Dorsolateral prefrontal cortex (tissue), 120 donors: ENCODE measurements at regions of chr6 and their contacts with region 1.

Region 1: GRCh38 chr6:159726918-159727716 is at the start of gene WTAP:
- DNase-seq: peak; percentile 91 to 97 (median 93)
- H3K4me3 ChIP-seq: peak within 1 kb of the TSS; percentile 64 to 100 (median 94)
- H3K27ac ChIP-seq: peak within 1 kb of the TSS; percentile 89 to 100 (median 99)
- H3K27me3 ChIP-seq: no peaks in the 10 kb centered on the region
- CTCF ChIP-seq: peak in 14 of 56 donors; percentile 4 to 33 (median 16)
- total RNA-seq, gene WTAP: 54.0 to 94.6 (median 69.0) TPM

Region 2: DNA sequence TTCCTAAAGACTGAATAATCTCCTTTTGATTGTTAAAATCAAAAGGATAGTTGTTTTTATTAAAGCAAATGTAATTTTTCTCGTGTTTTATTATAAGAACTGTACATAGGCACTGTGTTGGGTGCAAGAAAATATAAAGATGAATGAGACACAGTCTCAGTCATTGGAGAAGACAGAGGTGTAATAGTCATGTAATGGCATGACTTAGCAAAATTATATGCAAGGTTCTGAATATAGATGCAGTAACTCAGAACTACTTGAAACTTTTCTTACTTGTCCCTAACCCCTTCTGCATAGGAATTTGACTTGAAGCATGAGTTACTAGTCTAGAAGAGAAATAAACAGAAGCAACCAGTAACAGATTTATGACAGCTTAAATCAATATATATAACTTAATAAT is 15.0 kb after region 1 on chr6:
- intact Hi-C with region 1: no loop called
- DNase-seq: no peak
- H3K4me3 ChIP-seq: no peak overlapping the region
- H3K27ac ChIP-seq: no peak overlapping the region
- H3K27me3 ChIP-seq: no peaks in the 10 kb centered on the region
- CTCF ChIP-seq: no peak

Region 3: DNA sequence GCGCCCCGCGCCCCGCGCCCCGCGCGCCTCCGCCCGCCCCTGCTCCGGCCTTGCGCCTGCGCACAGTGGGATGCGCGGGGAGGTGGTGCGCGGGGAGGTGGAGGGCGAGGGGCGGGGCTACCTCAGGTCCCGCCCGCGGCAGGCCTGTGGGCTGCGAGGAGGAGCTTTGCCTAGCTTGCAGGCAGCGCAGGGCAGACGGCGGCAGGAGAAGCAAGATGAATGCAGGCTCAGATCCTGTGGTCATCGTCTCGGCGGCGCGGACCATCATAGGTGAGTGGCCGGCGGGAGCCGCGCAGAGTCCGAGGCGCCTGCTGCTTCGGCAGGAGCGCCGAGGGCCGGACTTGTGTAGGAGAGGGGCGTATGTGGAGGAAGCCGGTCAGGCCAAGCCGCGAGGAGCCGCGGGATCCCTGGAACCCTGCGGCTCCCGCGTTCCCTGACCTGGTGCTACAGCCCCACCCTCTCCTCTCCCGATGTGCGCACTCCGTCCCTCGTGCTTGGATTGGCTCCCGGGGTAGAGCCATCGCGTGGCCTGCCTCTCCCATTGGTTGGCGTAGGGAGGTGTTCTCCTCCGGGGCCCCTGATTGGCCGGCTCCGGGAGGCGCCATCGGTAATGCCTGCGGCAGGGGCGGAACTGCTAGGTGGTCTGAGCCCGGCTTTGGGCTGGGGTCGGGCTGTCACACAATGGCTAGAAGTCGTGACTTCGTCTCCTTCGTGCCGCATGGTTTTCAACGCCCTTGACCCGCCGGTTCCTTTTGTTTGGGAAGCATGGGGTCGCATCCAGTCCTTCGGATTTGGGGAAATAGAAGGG is 35.0 kb after region 1 on chr6 and contains the start of gene ACAT2:
- intact Hi-C with region 1: loop called (anchors 1 to 2 kb)
- DNase-seq: peak; percentile 96 to 99 (median 98)
- H3K4me3 ChIP-seq: peak within 1 kb of the TSS; percentile 63 to 100 (median 98)
- H3K27ac ChIP-seq: peak within 1 kb of the TSS; percentile 92 to 100 (median 100)
- H3K27me3 ChIP-seq: no peaks in the 10 kb centered on the region
- CTCF ChIP-seq: peak in 22 of 56 donors; percentile 3 to 42 (median 26)
- total RNA-seq, gene ACAT2: 15.6 to 93.3 (median 38.7) TPM

Region 4: DNA sequence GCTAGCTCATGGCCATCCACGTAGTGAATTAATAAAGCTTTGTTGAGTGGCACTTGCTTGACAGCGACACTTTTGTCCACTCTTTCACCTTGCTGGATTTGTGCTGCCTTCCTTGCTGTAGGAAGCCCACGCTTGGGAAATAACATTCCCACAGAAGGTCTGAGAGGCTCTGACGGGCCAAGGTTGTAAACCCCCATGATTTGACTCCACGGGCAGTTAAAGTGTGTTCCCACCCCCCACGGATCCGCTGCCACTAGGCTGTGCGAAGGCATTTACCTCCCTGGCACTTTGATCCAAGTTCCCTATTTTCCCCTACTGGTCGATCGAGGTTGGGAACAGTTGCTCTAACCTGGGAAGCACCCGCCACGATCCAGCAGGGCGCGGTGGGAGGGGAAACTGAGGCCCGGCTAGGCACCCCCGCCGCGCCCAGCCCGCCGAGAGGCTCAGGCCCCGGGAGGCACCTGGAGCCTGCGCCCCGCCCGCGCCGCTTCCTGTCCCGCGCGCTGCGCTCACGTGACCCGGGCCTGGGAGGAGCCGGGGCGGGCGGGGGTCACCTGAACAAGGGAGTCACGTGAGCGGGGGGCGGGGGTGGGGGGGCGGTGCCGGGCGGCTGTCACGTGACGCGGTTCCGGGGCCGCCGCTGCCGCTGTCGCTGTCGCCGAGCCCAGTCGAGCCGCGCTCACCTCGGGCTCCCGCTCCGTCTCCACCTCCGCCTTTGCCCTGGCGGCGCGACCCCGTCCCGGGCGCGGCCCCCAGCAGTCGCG is 241.5 kb after region 1 on chr6 and contains the start of gene IGF2R:
- intact Hi-C with region 1: loop called in 1 of 2 experiments (anchors 10 kb)
- DNase-seq: peak; percentile 80 to 92 (median 89)
- H3K4me3 ChIP-seq: peak within 1 kb of the TSS; percentile 68 to 98 (median 91)
- H3K27ac ChIP-seq: peak within 1 kb of the TSS in 57 of 59 donors; percentile 18 to 94 (median 80)
- H3K27me3 ChIP-seq: no peaks in the 10 kb centered on the region
- CTCF ChIP-seq: peak in 22 of 56 donors; percentile 9 to 40 (median 25)
- total RNA-seq, gene IGF2R: 28.4 to 54.8 (median 42.0) TPM